GM12878 (cell line): ENCODE measurements at regions of chr17 and their contacts with region 1.

Region 1: GRCh38 chr17:82400830-82401229 is 17.3 kb upstream of the HEXD start:
- DNase-seq: no peak
- ATAC-seq: peak; percentile 85
- H3K4me3 ChIP-seq: peak overlapping the region; percentile 19; the same call in 1 of the 2 replicates
- H3K27ac ChIP-seq: no peak overlapping the region
- H3K4me1 ChIP-seq: peaks cover 6% of the 10 kb centered on the region; the same call in 1 of the 2 replicates
- H3K27me3 ChIP-seq: no peaks in the 10 kb centered on the region
- CTCF ChIP-seq: no peak
- EP300 ChIP-seq: 0 out of 4 replicates have a peak, but pooled peaks of 1 of the 2 experiments have one; percentile 44
- POLR2A ChIP-seq: no peak
- RAD21 ChIP-seq: no peak

Region 2: DNA sequence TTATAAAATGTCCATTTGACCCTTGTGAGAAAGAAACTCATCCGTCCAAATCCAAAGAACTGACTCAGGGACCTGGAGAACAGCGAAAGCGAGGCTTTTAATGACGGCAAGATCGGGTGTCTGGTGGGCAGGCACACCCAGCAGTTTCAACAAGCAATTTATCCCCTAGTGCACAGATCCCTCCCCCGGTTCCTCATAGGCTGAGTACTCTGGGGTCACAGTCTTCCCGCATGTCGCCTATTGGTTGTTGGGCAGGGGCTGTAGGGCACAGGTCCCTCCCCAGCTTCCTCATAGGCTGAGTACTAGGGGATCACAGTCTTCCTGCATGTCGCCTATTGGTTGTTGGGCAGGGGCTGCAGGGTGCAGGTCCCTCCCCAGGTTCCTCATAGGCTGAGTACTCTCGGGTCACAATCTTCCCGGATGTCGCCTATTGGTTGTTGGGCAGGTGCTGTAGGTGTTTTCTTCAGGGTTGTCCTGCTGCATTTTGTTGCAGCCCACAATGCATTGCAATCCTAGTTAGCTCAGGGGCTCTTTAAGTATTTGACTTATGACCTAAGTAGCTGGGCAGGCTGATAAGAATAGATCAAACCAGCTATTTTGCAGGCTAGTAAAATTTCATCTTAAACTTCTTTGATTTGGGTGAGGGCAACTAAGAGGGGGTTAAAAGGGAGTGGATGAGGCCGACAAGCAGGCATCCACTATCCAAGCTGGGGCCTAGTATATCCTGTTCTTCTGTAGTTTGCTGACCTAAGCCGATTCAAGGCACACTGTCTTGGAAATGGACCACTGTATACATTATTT is 32.9 kb before region 1 on chr17:
- CTCF ChIA-PET with region 1: interaction called, 3 read pairs
- POLR2A ChIA-PET with region 1: interaction called, 3 read pairs
- RAD21 ChIA-PET with region 1: interaction called, 3 read pairs
- SMC1A ChIA-PET with region 1: interaction called, 5 read pairs
- in situ Hi-C with region 1: no loop called
- intact Hi-C with region 1: loop called (anchors 5 kb)
- DNase-seq: no peak
- ATAC-seq: peak; percentile 84
- H3K4me3 ChIP-seq: no peak overlapping the region
- H3K27ac ChIP-seq: no peak overlapping the region
- H3K4me1 ChIP-seq: peaks cover 10% of the 10 kb centered on the region
- H3K27me3 ChIP-seq: peaks cover 0 to 4% of the 10 kb centered on the region in 2 experiments; a peak in 1 of 4 replicates
- CTCF ChIP-seq: no peak
- EP300 ChIP-seq: no peak
- POLR2A ChIP-seq: no peak
- RAD21 ChIP-seq: no peak